ENCODE measurements at regions of chr10 and their contacts with region 1.

Region 1: DNA sequence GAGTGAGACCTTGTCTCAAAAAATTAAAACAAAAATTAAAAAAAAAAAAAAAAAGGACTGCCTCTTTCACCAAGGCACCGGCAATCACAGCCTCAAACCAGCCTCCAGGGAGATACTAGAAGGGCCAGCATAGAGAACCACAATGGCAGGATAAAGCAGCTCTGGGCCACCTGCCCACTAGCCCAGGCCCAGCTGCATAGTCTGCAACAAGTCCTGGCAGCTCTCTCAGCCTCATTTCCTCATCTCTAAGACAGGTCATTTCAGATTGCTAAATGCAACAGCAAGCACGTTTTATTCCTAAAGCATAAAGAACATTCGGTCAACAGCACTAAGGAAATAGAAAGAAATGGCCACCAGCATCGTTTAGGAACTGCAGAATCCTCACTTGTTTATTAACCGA is 28.8 kb downstream of the XPNPEP1 start:
- DNase-seq: peak; percentile 73 to 81
- ATAC-seq: peak; percentile 75 to 86 (median 82)
- H3K4me3 ChIP-seq: no peak overlapping the region
- H3K27ac ChIP-seq: peak overlapping the region; percentile 61 to 86 (median 72)
- H3K4me1 ChIP-seq: peaks cover 21 to 99% (median 82%) of the 10 kb centered on the region in 9 donors
- H3K27me3 ChIP-seq: no peaks in the 10 kb centered on the region
- CTCF ChIP-seq: no peak

Region 2: GRCh38 chr10:109922976-109923921 is 28.7 kb after region 1 on chr10 and contains the start of gene XPNPEP1:
- intact Hi-C with region 1: loop called in 2 of 10 experiments (anchors 5 kb)
- DNase-seq: peak; percentile 89 to 90
- ATAC-seq: peak; percentile 96 to 99 (median 98)
- H3K4me3 ChIP-seq: peak within 1 kb of the TSS; percentile 71 to 99 (median 92)
- H3K27ac ChIP-seq: peak within 1 kb of the TSS; percentile 81 to 99 (median 97)
- H3K4me1 ChIP-seq: peaks cover 3 to 47% (median 21%) of the 10 kb centered on the region in 9 donors
- H3K27me3 ChIP-seq: no peaks in the 10 kb centered on the region
- CTCF ChIP-seq: no peak
- total RNA-seq, gene XPNPEP1: 35.8 to 51.6 (median 43.5) TPM

Region 3: DNA sequence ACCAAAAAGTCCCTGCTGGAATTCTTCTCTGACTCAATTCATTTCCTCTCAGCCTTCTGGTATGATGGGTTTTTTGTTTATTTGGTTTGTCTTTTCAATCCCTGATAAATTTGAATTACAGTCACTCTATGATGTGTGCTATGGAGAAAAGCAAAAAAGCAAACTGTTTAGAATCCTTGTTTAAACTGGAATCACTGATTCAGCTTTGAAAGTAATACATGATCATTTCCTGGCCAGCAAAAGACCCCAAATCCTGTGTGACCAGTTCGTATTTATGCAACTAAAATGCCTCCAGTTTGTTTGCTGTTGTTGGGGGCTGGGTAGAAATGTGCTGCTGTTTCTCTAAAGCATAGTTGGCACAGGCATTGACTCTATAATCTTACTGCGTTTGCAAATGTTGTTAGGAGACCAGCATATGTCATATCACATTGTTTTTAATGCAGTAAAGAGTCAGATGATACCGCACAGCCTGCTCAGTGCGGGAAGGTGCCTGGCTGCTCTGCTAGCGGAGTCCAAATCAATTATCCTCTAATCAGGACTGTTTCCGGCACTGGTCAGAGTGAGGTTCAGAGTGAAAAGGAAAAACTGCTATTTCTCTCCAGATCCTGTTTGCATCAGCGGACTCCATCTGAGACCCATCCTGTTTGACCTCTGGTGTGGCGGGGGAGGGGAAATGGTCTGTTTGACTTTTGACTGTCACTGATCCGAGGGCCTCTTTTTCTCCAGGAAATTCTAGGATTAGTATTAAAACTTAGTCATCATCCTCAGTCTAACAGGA is 72.6 kb after region 1 on chr10:
- intact Hi-C with region 1: loop called in 4 of 10 experiments (anchors 5 to 10 kb)
- DNase-seq: peak in 1 of 2 donors; percentile 60
- ATAC-seq: peak in 5 of 8 donors; percentile 7 to 60 (median 56)
- H3K4me3 ChIP-seq: no peak overlapping the region
- H3K27ac ChIP-seq: peak overlapping the region in 9 of 10 donors; percentile 18 to 75 (median 48)
- H3K4me1 ChIP-seq: peaks cover 17 to 60% (median 38%) of the 10 kb centered on the region in 9 donors
- H3K27me3 ChIP-seq: no peaks in the 10 kb centered on the region
- CTCF ChIP-seq: no peak

Region 4: DNA sequence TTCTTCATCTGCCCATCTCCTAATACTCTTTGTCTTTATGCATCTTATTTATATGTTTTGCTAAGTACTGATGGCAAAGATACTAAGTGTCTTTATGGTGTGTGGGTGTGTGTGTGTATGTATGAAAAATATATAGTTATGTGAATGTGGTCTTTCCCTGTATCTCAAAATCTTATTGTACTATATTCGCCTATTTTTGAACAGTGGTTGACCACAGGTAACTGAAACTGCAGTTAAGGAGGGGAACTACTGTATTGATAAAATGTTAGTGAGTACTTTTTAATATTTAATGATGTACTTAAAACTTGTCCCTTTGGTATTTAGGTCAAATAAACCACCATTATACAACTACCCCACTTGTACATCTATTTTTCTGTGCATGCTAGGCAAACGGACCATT is 199.2 kb after region 1 on chr10:
- intact Hi-C with region 1: loop called in 1 of 10 experiments (anchors 10 kb)
- DNase-seq: no peak
- ATAC-seq: no peak
- H3K4me3 ChIP-seq: no peak overlapping the region
- H3K27ac ChIP-seq: no peak overlapping the region
- H3K4me1 ChIP-seq: peaks cover 0 to 53% (median 26%) of the 10 kb centered on the region in 9 donors
- H3K27me3 ChIP-seq: no peaks in the 10 kb centered on the region
- CTCF ChIP-seq: no peak

Region 5: DNA sequence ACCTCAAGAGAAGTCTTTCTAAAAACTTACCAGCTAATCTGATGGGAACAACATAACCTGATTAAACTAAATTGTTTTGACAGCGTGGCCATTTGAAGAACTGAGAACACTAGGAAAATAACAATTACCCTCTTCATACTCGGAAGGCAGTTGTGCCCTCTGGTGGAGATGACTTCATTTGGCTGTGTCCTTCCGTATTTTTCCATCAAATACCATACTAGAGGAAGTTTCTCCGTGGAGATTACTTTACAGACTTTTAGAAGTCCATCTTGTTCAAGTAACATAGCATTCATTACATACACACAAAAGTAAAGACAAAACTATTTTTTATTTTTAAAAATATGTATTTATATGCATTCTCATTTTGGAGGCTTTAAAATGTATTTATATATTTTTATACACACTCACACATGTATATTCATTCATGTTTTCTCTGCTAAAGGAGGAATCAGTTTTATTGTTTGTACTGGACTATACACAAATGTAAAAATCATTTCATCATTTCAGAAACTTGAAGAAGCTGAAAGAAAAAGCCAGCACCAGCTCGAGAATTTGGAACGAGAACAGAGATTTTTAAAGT is 385.0 kb after region 1 on chr10:
- intact Hi-C with region 1: loop called in 3 of 10 experiments (anchors 5 to 10 kb)
- DNase-seq: peak in 1 of 2 donors; percentile 71
- ATAC-seq: peak; percentile 46 to 84 (median 76)
- H3K4me3 ChIP-seq: peak overlapping the region in 1 of 10 donors; percentile 26
- H3K27ac ChIP-seq: peak overlapping the region in 6 of 10 donors; percentile 5 to 57 (median 41)
- H3K4me1 ChIP-seq: peaks cover 2 to 55% (median 30%) of the 10 kb centered on the region in 9 donors
- H3K27me3 ChIP-seq: no peaks in the 10 kb centered on the region
- CTCF ChIP-seq: peak; percentile 69 to 89 (median 78)

Measured in heart right ventricle (tissue), 16 donors.